ENCODE measurements at regions of chr22 and their contacts with region 1.

Region 1: DNA sequence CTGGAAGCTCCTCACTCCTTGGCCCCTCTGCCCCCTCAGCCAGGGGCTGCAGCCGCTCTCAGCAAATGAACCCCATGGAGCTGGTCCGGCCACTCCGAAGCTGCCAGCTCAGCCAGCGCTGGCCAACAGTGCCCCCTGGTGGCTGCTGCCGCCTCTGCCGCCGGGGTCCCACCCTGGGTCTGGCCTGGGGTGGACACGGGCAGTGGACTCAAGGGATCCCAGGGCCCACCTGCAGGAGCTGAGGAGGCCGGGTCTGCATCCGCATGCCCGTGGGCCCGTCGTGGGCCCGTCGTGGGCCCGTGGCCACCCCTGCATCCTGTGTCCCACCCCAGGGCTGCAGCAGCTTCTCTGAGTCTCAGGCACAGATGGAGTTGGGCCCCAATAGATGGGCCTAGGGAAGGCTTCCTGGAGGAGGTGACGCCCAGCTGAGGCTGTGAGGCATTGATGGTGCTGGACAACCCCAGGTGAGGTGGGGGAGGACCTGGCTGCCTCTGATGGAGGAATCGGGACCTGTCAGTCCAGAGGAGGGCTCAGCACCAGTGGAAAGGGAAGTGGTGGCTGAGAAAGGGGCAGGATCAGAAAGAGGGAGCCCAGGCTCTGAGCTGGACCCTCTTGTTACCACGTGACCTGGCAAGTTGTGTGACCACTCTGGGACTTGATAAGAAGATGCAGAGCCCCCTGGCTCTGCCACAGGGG is 522.3 kb downstream of the BRD1 start:
- DNase-seq: peak; percentile 82
- ATAC-seq: peak; percentile 66
- H3K4me3 Mint-ChIP-seq: no peak overlapping the region
- H3K27ac Mint-ChIP-seq: no peak overlapping the region
- H3K4me1 Mint-ChIP-seq: no peaks in the 10 kb centered on the region
- H3K27me3 Mint-ChIP-seq: peaks cover 19% of the 10 kb centered on the region

Region 2: GRCh38 chr22:48574776-48575565 is 730.4 kb before region 1 on chr22:
- CTCF ChIA-PET with region 1: no interaction called
- POLR2A ChIA-PET with region 1: no interaction called
- intact Hi-C with region 1: loop called (anchors 1 to 10 kb)
- DNase-seq: peak; percentile 67
- ATAC-seq: peak; percentile 85
- H3K4me3 Mint-ChIP-seq: no peak overlapping the region
- H3K27ac Mint-ChIP-seq: no peak overlapping the region
- H3K4me1 Mint-ChIP-seq: no peaks in the 10 kb centered on the region
- H3K27me3 Mint-ChIP-seq: peaks cover 29% of the 10 kb centered on the region

Region 3: GRCh38 chr22:49046546-49047361 is 258.6 kb before region 1 on chr22:
- CTCF ChIA-PET with region 1: interaction called, 4 read pairs
- POLR2A ChIA-PET with region 1: no interaction called
- intact Hi-C with region 1: loop called (anchors 1 to 5 kb)
- DNase-seq: peak; percentile 67
- ATAC-seq: peak; percentile 51
- H3K4me3 Mint-ChIP-seq: no peak overlapping the region
- H3K27ac Mint-ChIP-seq: no peak overlapping the region
- H3K4me1 Mint-ChIP-seq: no peaks in the 10 kb centered on the region
- H3K27me3 Mint-ChIP-seq: peaks cover 8% of the 10 kb centered on the region

Region 4: DNA sequence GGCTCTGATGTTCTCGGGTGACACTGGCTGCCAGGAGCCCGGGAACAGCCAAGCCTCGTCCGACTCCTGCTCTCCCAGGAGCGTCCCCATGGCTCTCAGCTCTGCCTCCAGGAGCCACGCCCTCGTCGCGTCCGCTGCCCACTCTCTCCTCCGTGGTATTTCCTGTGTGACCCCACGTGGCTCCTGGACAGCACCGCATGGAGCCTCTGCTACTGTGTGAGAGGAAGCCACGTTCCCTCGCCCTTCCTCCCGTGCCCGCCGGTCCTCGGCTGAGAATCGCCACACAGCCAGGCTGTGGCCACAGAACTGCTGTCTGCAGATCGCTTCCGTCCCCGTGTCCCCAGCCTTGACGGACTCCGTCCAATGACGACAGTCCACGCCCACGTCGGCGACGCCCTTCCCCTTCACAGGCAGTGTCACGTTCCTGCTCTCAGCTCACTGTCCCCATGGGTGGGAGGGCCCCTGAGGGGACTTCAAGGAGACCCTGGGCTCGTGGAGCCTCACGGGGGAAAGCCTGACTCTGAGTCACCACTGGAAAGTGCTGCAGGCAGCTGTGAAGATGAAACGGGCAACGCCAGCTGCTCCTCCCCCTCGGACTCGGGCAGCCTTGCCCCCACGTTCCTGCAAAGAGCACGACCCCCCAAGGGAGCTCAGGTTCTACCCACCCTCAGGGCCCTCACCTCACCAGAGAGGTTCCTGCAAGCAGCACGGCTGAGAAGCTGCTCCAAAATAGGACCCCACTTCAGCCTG is 63.8 kb after region 1 on chr22:
- CTCF ChIA-PET with region 1: no interaction called
- POLR2A ChIA-PET with region 1: no interaction called
- intact Hi-C with region 1: no loop called
- DNase-seq: no peak
- ATAC-seq: no peak
- H3K4me3 Mint-ChIP-seq: no peak overlapping the region
- H3K27ac Mint-ChIP-seq: no peak overlapping the region
- H3K4me1 Mint-ChIP-seq: no peaks in the 10 kb centered on the region
- H3K27me3 Mint-ChIP-seq: peaks cover 6% of the 10 kb centered on the region

Region 5: DNA sequence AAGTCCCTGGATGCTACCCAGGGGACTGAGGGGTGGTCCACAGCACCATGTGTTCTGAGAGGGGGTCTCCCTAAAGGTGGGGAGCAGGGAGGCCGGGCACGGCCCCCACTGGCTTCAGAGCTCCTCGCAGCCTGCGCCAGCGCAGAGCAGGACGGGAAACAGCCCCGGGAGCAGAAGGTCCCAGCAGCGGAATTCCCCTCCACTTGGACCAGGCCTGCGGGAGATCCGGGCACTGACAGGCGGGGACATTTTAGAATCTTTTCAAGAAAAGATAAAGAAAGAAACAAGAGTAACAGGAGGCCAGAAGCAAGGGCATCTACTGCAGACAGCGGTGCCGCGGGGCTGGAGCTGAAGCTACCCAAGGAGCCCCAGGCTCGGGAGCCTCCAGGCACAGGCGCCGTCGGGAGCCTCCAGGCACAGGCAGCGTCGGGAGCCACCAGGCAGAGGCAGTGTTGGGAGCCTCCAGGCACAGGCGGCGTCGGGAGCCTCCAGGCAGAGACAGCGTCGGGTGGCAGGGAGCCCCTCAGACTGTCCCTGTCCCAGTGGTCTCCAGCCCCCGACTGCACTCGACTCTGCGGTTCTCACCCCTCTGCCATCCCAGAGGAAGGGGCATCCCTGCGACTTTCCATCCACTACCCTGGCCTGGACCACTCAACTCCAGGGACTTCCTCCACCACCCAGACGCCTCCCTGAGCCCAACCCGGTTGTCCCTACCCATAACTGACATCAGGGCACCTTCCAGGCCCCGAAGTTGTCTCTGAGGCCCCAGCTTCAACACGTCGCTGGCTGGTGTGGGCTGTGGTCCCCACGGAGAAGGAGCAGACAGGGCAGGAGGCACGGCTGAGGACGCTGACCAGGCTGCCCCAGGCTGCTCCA is 311.2 kb after region 1 on chr22:
- CTCF ChIA-PET with region 1: no interaction called
- POLR2A ChIA-PET with region 1: no interaction called
- intact Hi-C with region 1: no loop called
- DNase-seq: no peak
- ATAC-seq: no peak
- H3K4me3 Mint-ChIP-seq: no peak overlapping the region
- H3K27ac Mint-ChIP-seq: no peak overlapping the region
- H3K4me1 Mint-ChIP-seq: no peaks in the 10 kb centered on the region
- H3K27me3 Mint-ChIP-seq: no peaks in the 10 kb centered on the region

Region 6: GRCh38 chr22:49724893-49725474 is 419.6 kb after region 1 on chr22:
- CTCF ChIA-PET with region 1: no interaction called
- POLR2A ChIA-PET with region 1: no interaction called
- intact Hi-C with region 1: loop called in 1 of 2 experiments (anchors 10 kb)
- DNase-seq: peak; percentile 87
- ATAC-seq: peak; percentile 94
- H3K4me3 Mint-ChIP-seq: peak overlapping the region; percentile 47
- H3K27ac Mint-ChIP-seq: no peak overlapping the region
- H3K4me1 Mint-ChIP-seq: peaks cover 10% of the 10 kb centered on the region
- H3K27me3 Mint-ChIP-seq: peaks cover 28% of the 10 kb centered on the region